ENCODE measurements at regions of chr6 and their contacts with region 1.

Region 1: GRCh38 chr6:138428944-138429598 is 25.0 kb downstream of the HEBP2 start:
- DNase-seq: peak; percentile 75
- H3K4me3 Mint-ChIP-seq: no peak overlapping the region
- H3K27ac Mint-ChIP-seq: no peak overlapping the region
- H3K4me1 Mint-ChIP-seq: no peaks in the 10 kb centered on the region
- H3K27me3 Mint-ChIP-seq: peaks cover 1% of the 10 kb centered on the region

Region 2: GRCh38 chr6:138115877-138116660 is 313.0 kb before region 1 on chr6:
- intact Hi-C with region 1: loop called (anchors 2 kb)
- DNase-seq: peak; percentile 81
- H3K4me3 Mint-ChIP-seq: no peak overlapping the region
- H3K27ac Mint-ChIP-seq: no peak overlapping the region
- H3K4me1 Mint-ChIP-seq: peaks cover 7% of the 10 kb centered on the region
- H3K27me3 Mint-ChIP-seq: peaks cover 44% of the 10 kb centered on the region

Region 3: GRCh38 chr6:138346302-138347195 is 82.5 kb before region 1 on chr6:
- intact Hi-C with region 1: no loop called
- DNase-seq: no peak
- H3K4me3 Mint-ChIP-seq: no peak overlapping the region
- H3K27ac Mint-ChIP-seq: no peak overlapping the region
- H3K4me1 Mint-ChIP-seq: no peaks in the 10 kb centered on the region
- H3K27me3 Mint-ChIP-seq: peaks cover 20% of the 10 kb centered on the region

Region 4: DNA sequence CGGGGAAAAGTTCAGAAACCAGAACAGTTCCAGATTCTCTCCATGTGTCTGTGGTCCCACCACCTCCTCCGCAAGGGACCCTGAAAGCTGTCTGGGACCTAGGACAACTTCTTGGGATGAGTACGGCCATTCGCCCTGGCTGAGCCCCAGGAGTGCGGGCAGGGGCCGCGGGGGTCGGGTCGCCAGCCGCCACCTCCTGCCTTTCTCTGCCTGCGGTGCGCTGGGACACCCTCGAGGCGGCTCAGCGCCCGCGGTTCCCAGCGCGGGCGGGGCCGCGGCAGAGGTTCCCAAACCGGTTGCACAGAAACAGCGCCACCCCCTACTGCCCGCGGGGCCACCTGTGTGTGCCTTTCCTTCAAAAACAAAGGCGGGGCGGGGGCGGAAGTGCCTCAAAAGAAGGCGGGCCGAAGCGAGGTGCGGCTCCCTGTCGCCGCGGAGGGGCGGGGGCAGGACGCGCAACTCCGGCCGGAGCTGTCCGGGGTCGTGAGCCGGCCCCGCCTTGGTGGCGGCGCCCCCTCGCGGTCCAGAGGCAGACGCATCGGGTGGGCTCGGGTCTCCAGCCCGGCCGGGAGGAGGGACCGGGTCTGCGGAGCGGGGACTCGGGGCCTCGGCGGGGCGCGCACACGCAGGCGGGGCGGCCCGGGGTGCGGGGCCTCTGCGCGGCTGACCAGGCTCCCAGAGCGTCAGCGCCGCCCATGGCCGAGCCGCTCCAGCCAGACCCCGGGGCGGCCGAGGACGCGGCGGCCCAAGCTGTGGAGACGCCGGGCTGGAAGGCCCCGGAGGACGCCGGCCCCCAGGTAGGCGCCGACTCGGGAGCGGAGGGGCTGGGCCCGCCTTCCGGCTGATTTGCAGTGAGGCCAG is 25.0 kb before region 1 on chr6 and contains the start of gene HEBP2:
- intact Hi-C with region 1: loop called (anchors 2 kb)
- DNase-seq: peak; percentile 97
- H3K4me3 Mint-ChIP-seq: peak within 1 kb of the TSS; percentile 82
- H3K27ac Mint-ChIP-seq: peak within 1 kb of the TSS; percentile 58
- H3K4me1 Mint-ChIP-seq: peaks cover 12% of the 10 kb centered on the region
- H3K27me3 Mint-ChIP-seq: peaks cover 15% of the 10 kb centered on the region
- total RNA-seq, gene HEBP2: 16.2 and 17.4 TPM in 2 replicates

Region 5: DNA sequence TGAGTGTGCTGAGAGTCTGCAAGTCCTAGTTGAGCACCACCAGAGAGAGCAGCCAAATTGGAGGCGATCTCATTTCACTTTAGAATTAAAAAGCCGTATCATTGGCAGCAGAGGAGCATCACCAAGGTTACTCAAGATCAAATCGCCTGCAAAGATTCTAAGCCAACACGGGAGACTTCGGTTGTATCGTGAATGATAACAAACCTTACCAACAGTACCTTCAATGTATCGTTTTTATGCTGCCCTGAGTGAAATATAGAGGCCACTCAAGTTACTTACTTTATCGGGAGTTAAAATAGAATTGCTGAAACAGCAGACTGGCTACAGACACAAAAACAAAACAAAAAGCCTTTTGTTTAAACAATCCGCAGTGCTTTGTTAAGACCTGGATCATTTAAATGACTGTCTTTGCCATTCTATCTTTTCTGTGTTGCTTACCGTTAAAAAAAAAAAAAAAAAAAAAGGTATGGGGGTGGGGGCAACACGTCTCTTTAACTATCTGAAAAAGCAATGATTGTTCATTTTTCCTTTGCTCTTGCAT is 56.0 kb after region 1 on chr6:
- intact Hi-C with region 1: no loop called
- DNase-seq: no peak
- H3K4me3 Mint-ChIP-seq: no peak overlapping the region
- H3K27ac Mint-ChIP-seq: no peak overlapping the region
- H3K4me1 Mint-ChIP-seq: peaks cover 7% of the 10 kb centered on the region
- H3K27me3 Mint-ChIP-seq: peaks cover 6% of the 10 kb centered on the region

Region 6: GRCh38 chr6:138509371-138509770 is 80.3 kb after region 1 on chr6:
- intact Hi-C with region 1: loop called (anchors 1 kb)
- DNase-seq: peak; percentile 83
- H3K4me3 Mint-ChIP-seq: no peak overlapping the region
- H3K27ac Mint-ChIP-seq: no peak overlapping the region
- H3K4me1 Mint-ChIP-seq: peaks cover 1% of the 10 kb centered on the region
- H3K27me3 Mint-ChIP-seq: peaks cover 23% of the 10 kb centered on the region

Region 7: GRCh38 chr6:138517635-138518034 is 88.6 kb after region 1 on chr6:
- intact Hi-C with region 1: loop called (anchors 1 kb)
- DNase-seq: peak; percentile 88
- H3K4me3 Mint-ChIP-seq: no peak overlapping the region
- H3K27ac Mint-ChIP-seq: no peak overlapping the region
- H3K4me1 Mint-ChIP-seq: peaks cover 19% of the 10 kb centered on the region
- H3K27me3 Mint-ChIP-seq: peaks cover 5% of the 10 kb centered on the region

Region 8: DNA sequence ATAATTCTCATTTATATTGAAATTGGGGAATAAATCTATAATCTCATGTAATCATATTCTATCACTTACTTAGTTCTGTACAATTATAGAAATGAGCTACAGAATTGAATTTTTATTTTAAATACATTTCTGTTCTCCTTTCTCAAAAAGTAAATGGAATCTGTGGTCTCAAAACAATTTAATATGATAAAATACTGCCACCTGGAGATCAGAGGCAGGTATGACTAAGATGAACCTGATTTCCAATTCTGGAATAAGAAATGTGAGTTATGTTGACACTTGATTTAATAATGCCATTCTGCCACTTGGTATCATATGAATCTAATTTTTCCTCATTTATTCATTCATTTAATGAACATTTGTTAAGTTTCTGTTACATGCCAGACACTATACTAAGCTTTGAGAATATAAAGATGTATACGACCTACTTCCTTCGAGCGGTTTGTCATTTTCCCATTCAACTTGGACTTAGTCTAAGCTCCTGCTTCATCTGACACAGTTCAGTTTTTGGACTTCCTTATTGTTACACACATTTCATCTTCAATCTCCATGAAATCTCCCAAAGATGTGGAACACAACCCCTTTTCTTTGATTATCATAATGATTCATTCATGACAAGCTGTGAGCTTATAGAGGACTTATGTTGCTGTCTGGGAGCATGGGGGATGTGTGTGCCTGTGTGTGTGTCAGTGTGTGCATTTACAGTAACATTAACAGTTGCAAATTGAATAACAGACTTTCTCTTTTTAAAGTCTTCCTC is 337.0 kb after region 1 on chr6:
- intact Hi-C with region 1: loop called (anchors 1 kb)
- DNase-seq: no peak
- H3K4me3 Mint-ChIP-seq: no peak overlapping the region
- H3K27ac Mint-ChIP-seq: no peak overlapping the region
- H3K4me1 Mint-ChIP-seq: peaks cover 9% of the 10 kb centered on the region
- H3K27me3 Mint-ChIP-seq: no peaks in the 10 kb centered on the region